ENCODE measurements at regions of chr17 and their contacts with region 1.

Region 1: GRCh38 chr17:7496470-7497183 is 12.5 kb downstream of the POLR2A start:
- DNase-seq: no peak
- H3K4me3 ChIP-seq: no peak overlapping the region
- H3K27ac ChIP-seq: no peak overlapping the region
- H3K4me1 ChIP-seq: no peaks in the 10 kb centered on the region
- H3K27me3 ChIP-seq: no peaks in the 10 kb centered on the region
- CTCF ChIP-seq: no peak
- EP300 ChIP-seq: no peak
- POLR2A ChIP-seq: no peak
- RAD21 ChIP-seq: no peak

Region 2: DNA sequence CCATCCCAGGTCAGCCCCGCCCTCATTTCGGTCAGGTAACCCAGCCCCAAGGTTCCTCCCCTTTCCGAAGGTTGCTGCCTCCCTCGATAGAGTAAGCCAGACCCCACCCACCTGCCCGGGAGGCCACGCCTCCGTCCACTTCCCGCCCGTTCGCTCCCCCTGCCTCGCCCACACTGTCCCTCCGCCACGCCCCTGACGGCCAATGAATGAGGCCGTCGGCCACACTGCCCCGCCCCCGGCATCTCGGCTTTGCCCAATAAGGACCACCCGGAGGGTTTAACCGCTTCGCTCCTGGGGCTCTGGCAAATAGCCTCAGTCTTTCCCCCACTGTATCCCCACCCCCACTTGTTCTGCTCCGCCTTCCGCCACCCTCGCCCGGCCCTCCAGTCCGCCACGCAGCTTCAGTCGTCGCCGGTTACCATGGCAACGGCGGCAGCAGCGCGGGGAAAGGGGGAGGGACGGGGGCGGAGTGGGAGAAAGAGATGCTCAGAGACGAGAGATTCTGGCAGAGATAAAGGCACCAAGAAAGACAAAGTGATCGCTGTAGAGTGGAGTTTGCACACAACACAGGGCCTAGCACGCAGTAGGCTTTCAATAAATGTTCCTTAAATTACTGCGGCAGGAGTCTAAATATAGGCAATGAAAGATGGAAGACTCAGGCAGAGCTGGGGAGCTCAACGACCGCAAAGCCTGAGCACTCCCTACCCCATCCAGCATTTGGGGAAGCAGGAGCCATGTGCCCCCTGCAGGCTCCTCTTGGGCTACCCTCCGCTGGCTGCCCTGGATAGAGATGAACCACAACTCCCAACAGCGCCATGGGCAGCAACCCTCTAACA is 282.1 kb before region 1 on chr17:
- CTCF ChIA-PET with region 1: no interaction called
- POLR2A ChIA-PET with region 1: no interaction called
- DNase-seq: peak; percentile 99 to 100
- H3K4me3 ChIP-seq: peak overlapping the region; percentile 44 to 68 (median 50); a peak in 7 of 8 replicates
- H3K27ac ChIP-seq: peak overlapping the region; percentile 86
- H3K4me1 ChIP-seq: peaks cover 9 to 45% (median 28%) of the 10 kb centered on the region in 4 experiments
- H3K27me3 ChIP-seq: no peaks in the 10 kb centered on the region
- CTCF ChIP-seq: peak; percentile 32 to 76 (median 63)
- EP300 ChIP-seq: peak in 1 of 2 experiments; percentile 7; a peak in 1 of 3 replicates
- POLR2A ChIP-seq: no peak
- RAD21 ChIP-seq: peak; percentile 23; a peak in 2 of 4 replicates

Region 3: DNA sequence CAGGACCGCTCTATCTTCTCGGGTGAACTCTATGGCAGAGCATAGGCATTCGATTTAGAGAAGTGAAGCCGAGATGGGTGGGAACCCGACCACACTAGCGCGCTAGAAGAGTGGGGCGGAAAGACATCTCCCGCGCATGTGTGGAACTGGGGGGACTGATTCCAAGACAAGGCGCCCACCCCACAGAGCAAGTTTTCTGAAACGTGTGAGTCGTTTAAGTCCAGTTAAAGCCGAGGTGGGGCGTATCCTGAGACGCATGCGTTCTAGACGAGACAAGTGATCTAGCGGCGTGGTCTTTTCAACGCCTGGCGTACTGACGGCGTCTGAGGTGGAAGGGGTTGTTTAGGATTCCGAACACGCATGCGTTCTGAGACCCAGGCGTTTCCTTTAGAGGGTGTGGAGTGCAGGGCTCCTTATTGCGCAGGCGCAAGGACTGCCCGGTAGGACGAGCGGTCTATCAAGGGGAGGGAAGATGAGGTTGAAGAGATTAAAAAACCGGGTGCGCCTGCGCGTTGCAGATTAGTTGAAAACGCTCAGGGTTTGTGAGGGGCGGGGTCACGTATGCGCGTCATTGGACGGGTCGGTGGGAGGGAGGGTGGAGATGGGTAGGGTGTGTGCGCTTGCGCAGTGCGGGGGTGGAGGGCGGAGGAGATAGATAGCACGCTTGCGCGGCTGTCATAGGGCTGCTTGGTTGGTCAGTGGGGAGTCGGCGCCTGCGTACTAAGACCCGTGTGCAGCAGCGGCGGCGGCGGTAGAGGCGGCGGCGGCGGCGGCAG is 189.5 kb before region 1 on chr17 and contains the start of gene EIF5A:
- CTCF ChIA-PET with region 1: no interaction called
- POLR2A ChIA-PET with region 1: no interaction called
- DNase-seq: peak; percentile 99 to 100
- H3K4me3 ChIP-seq: peak within 1 kb of the TSS; percentile 87 to 97 (median 90)
- H3K27ac ChIP-seq: peak within 1 kb of the TSS; percentile 92
- H3K4me1 ChIP-seq: peaks cover 0 to 14% (median 6%) of the 10 kb centered on the region in 4 experiments; a peak in 5 of 7 replicates
- H3K27me3 ChIP-seq: no peaks in the 10 kb centered on the region
- CTCF ChIP-seq: no peak
- EP300 ChIP-seq: 0 out of 3 replicates have a peak, but pooled peaks of 1 of the 2 experiments have one; percentile 45
- POLR2A ChIP-seq: peak; percentile 39 to 62
- RAD21 ChIP-seq: no peak
- total RNA-seq, gene EIF5A: 1,158 and 1,172 TPM in 2 replicates

Region 4: GRCh38 chr17:7509937-7510336 is 13.3 kb after region 1 on chr17:
- CTCF ChIA-PET with region 1: interaction called, 82 read pairs
- POLR2A ChIA-PET with region 1: interaction called, 21 read pairs
- DNase-seq: no peak
- H3K4me3 ChIP-seq: no peak overlapping the region
- H3K27ac ChIP-seq: no peak overlapping the region
- H3K4me1 ChIP-seq: no peaks in the 10 kb centered on the region
- H3K27me3 ChIP-seq: no peaks in the 10 kb centered on the region
- CTCF ChIP-seq: no peak
- EP300 ChIP-seq: no peak
- POLR2A ChIP-seq: no peak
- RAD21 ChIP-seq: no peak

Measured in H1 (cell line).